Naive thymus-derived CD4-positive, alpha-beta T cell (primary cell): ENCODE measurements at regions of chr16 and their contacts with region 1.

Region 1: DNA sequence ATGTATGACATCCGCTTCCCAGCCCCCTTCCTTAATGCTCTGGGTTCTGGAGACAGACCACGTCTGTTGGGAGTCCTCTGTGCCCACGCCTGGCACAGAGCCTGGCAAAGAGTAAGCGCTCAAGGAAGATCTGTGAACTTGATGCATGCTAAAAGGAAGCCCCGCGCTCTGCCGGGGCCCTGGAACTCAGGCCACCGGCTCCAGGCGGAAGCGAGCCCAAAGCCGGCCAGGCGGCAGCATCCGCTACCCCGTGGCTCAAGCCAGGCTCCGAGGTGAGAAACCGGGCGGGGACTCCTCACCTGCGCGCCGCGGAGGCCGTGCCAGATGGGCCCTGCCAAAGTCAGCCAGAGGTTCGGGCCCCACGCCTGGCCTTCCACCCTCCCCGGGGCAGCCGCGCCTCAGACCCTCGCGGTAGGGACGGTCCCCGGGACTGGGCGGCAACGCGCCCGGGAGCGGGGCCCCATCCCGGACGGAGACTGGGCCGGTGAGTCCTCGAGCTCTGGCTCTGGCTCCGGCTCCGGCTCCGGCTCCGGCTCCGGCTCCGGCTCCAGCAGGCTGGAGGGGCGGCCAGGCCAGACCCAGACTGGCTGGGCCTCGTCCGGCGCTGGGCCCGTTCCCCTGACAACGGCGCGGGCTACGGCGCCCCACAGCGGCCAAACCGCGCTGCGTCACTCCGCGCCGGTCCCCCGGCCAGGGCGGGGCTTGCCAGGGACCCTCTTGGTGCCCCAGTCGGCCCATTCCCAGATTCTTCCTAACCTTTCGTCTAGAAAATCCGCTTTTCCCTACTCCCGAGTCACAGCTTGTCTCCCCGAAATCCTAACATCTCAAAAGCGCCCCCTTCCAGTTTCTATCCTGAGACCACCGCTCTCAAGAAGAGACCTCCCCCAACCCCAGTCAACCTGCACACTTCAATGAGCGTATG is at the start of gene ZDHHC1:
- DNase-seq: peak in 5 of 9 donors; percentile 19 to 76 (median 45)
- ATAC-seq: peak; percentile 90
- H3K4me3 ChIP-seq: peak within 1 kb of the TSS; percentile 30
- H3K4me3 Mint-ChIP-seq: peak within 1 kb of the TSS; percentile 67 to 88 (median 76)
- H3K27ac ChIP-seq: no peak within 1 kb of the TSS
- H3K27ac Mint-ChIP-seq: peak within 1 kb of the TSS in 3 of 9 donors; percentile 11 to 82 (median 63)
- H3K4me1 ChIP-seq: no peaks in the 10 kb centered on the region
- H3K4me1 Mint-ChIP-seq: peaks cover 5 to 15% (median 10%) of the 10 kb centered on the region in 7 donors
- H3K27me3 ChIP-seq: peaks cover 3 to 4% of the 10 kb centered on the region in 2 donors
- H3K27me3 Mint-ChIP-seq: peaks cover 22 to 42% (median 34%) of the 10 kb centered on the region in 5 donors
- total RNA-seq, gene ZDHHC1: 0.34 to 3.6 (median 0.48) TPM in 3 of 5 experiments, not detected in the others

Region 2: DNA sequence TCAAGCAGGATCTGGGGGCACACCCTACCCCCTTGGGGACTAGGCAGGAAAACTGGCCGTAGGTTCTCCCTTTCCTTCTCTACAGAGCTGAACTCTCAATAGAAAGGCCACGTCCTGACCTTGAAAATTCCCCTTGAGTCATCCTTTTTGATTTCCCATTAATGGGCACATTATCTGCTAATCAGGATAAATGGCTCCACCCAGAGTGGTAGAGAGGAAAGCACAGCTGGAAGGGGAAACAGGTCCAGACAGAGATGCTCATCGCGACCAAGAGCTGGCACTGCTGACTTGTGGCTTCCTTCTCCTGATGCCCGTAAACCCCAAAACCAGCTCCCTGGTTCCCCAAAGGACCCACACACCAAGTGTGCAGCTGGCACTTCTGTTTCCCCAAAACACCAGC is 1256.1 kb before region 1 on chr16:
- CTCF ChIA-PET with region 1: no interaction called
- POLR2A ChIA-PET with region 1: no interaction called
- intact Hi-C with region 1: no loop called
- DNase-seq: no peak
- ATAC-seq: no peak
- H3K4me3 ChIP-seq: no peak overlapping the region
- H3K4me3 Mint-ChIP-seq: no peak overlapping the region
- H3K27ac ChIP-seq: no peak overlapping the region
- H3K27ac Mint-ChIP-seq: no peak overlapping the region
- H3K4me1 ChIP-seq: no peaks in the 10 kb centered on the region
- H3K4me1 Mint-ChIP-seq: no peaks in the 10 kb centered on the region
- H3K27me3 ChIP-seq: no peaks in the 10 kb centered on the region
- H3K27me3 Mint-ChIP-seq: peaks cover 0 to 21% (median 7%) of the 10 kb centered on the region in 5 donors

Region 3: GRCh38 chr16:67349172-67349571 is 67.0 kb before region 1 on chr16:
- CTCF ChIA-PET with region 1: no interaction called
- POLR2A ChIA-PET with region 1: interaction called, 3 read pairs
- intact Hi-C with region 1: loop called in 1 of 2 experiments (anchors 1 kb)
- DNase-seq: peak in 4 of 9 donors; percentile 19 to 43 (median 31)
- ATAC-seq: no peak
- H3K4me3 ChIP-seq: no peak overlapping the region
- H3K4me3 Mint-ChIP-seq: no peak overlapping the region
- H3K27ac ChIP-seq: no peak overlapping the region
- H3K27ac Mint-ChIP-seq: peak overlapping the region in 1 of 9 donors; percentile 6
- H3K4me1 ChIP-seq: no peaks in the 10 kb centered on the region
- H3K4me1 Mint-ChIP-seq: no peaks in the 10 kb centered on the region
- H3K27me3 ChIP-seq: no peaks in the 10 kb centered on the region
- H3K27me3 Mint-ChIP-seq: peaks cover 0 to 13% (median 4%) of the 10 kb centered on the region in 5 donors